Caco-2 (cell line): ENCODE measurements at regions of chr20 and their contacts with region 1.

Region 1: DNA sequence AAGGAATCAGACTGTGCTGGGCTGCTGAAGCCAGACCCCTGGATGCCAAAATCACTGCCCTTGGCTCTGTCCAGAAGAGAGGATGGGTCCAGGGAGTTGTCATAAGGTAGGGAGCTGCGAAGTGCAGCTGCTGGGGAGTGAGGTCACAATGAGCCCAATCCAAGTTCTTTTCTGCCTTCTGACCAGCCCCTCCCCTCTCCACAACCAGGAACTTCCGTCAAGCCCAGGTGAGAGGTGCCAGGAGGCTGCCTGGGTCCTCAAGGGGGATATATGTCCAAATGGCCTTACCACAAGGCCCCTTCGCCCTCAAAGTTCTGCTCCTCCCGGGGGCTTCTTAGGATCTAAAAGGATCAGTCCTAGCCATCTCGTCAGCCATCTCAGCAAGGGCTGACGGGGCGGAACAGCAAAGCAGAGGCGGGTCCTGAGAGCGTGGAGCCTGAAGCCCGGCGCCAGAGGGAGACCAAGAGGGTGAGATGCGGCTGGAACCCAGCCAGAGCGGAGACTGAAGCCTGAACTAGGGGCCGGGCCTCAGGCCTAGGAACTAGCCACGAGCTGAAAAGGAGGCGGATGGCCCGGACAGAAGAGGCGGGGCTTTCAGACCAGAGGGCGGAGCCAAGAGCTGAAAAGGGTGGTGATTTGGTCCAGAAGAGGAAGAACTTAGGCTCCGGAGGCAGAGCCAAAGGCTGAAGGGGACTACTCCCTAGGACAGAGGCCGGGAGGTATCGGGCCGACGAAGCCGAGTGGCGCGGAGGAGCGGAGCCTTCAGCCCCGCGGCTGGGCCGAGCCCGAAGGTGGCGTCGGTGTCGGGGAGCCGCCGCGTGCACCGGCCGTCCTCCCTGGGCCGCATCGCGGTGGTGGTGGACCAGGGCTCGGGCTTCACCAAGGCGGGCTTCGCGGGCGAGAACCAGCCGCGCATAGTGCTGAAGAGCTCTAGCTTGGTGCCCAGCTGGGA is at the start of gene ACTL10:
- DNase-seq: peak; percentile 100
- H3K4me3 ChIP-seq: peak within 1 kb of the TSS; percentile 78
- H3K4me3 Mint-ChIP-seq: peak within 1 kb of the TSS; percentile 84
- H3K27ac Mint-ChIP-seq: peak within 1 kb of the TSS; percentile 85
- H3K4me1 ChIP-seq: peaks cover 25% of the 10 kb centered on the region
- H3K4me1 Mint-ChIP-seq: peaks cover 24% of the 10 kb centered on the region
- H3K27me3 ChIP-seq: no peaks in the 10 kb centered on the region
- H3K27me3 Mint-ChIP-seq: no peaks in the 10 kb centered on the region
- CTCF ChIP-seq: peak; percentile 19 to 64
- total RNA-seq, gene ACTL10: 3.4 and 4.5 TPM in 2 replicates

Region 2: DNA sequence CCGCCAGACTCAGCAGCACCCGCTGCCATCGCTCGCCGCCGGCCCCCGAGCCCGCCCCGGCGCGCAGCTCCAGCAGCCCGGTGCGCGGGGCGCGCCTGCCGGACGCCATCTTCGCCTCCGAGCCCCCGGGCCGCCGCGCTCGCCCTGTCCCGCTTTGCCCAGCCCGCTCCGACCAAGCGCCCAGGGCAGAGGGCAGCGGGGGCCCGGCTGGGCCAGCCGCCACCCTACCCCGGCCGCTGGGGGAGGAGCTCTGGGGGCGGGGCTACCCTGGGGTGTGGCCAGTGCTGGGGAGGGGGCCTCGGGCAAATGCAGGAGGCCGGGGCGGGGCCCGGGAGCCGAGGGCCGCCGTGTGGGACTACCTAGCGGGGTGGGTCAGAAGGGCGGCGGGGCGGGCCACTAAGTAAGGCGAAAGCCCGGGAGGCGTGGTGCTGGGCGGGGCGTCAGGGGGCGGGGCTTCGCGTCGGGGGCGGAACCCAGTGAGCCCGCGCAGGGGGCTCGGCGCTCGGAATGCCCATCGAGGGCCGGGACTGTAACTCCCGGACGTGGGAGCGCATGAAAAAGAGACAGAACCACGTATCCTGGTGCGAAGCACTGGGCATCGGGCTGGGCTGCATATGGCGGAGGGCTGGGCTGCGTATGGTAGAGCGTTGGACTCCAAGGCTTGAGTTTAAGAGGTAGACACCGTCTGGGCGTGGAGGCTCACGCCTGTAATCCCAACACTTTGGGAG is 222.9 kb before region 1 on chr20 and contains the start of gene SNTA1:
- CTCF ChIA-PET with region 1: interaction called, 13 read pairs
- POLR2A ChIA-PET with region 1: interaction called, 3 read pairs
- intact Hi-C with region 1: no loop called
- DNase-seq: peak; percentile 100
- H3K4me3 ChIP-seq: peak within 1 kb of the TSS; percentile 72
- H3K4me3 Mint-ChIP-seq: peak within 1 kb of the TSS; percentile 89
- H3K27ac Mint-ChIP-seq: peak within 1 kb of the TSS; percentile 9
- H3K4me1 ChIP-seq: peaks cover 22% of the 10 kb centered on the region
- H3K4me1 Mint-ChIP-seq: peaks cover 26% of the 10 kb centered on the region
- H3K27me3 ChIP-seq: no peaks in the 10 kb centered on the region
- H3K27me3 Mint-ChIP-seq: no peaks in the 10 kb centered on the region
- CTCF ChIP-seq: no peak
- total RNA-seq, gene SNTA1: 13.6 and 15.4 TPM in 2 replicates

Region 3: DNA sequence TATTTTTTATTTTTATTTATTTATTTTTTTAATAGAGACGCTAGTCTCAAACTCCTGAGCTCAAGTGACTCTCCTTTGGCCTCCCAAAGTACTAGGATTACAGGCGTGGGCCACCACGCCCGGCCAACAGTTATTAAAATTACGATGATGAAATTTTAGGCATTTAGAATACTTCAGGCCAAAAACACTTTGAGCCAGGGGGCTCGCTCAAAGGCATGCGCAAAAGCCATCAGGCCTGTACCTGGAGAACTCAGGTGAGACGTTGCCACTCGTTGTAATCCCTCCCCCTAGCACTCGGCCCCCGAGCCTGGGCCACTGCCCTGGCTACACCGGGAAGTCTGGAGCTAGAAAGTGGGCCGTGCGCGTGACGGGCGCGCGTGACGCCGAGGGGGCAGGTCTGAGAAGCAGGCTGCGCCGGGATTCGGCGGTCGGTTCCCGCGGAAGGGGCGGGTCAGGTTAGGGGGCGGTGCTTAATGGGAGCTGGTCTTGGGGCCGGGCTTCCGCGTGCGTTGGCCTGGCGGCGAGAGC is 177.0 kb before region 1 on chr20:
- CTCF ChIA-PET with region 1: interaction called, 19 read pairs
- POLR2A ChIA-PET with region 1: interaction called, 14 read pairs
- intact Hi-C with region 1: no loop called
- DNase-seq: peak; percentile 100
- H3K4me3 ChIP-seq: peak overlapping the region; percentile 16
- H3K4me3 Mint-ChIP-seq: peak overlapping the region; percentile 92
- H3K27ac Mint-ChIP-seq: peak overlapping the region; percentile 38
- H3K4me1 ChIP-seq: peaks cover 14% of the 10 kb centered on the region
- H3K4me1 Mint-ChIP-seq: peaks cover 8% of the 10 kb centered on the region
- H3K27me3 ChIP-seq: no peaks in the 10 kb centered on the region
- H3K27me3 Mint-ChIP-seq: no peaks in the 10 kb centered on the region
- CTCF ChIP-seq: no peak

Region 4: GRCh38 chr20:33686100-33686983 is 19.8 kb after region 1 on chr20 and contains the start of gene E2F1:
- CTCF ChIA-PET with region 1: interaction called, 29 read pairs
- POLR2A ChIA-PET with region 1: interaction called, 9 read pairs
- intact Hi-C with region 1: loop called (anchors 2 kb)
- DNase-seq: peak; percentile 99 to 100
- H3K4me3 ChIP-seq: peak within 1 kb of the TSS; percentile 80
- H3K4me3 Mint-ChIP-seq: peak within 1 kb of the TSS; percentile 68
- H3K27ac Mint-ChIP-seq: peak within 1 kb of the TSS; percentile 78
- H3K4me1 ChIP-seq: peaks cover 46% of the 10 kb centered on the region
- H3K4me1 Mint-ChIP-seq: peaks cover 59% of the 10 kb centered on the region
- H3K27me3 ChIP-seq: no peaks in the 10 kb centered on the region
- H3K27me3 Mint-ChIP-seq: no peaks in the 10 kb centered on the region
- CTCF ChIP-seq: peak; percentile 56 to 64
- total RNA-seq, gene E2F1: 67.5 and 74.7 TPM in 2 replicates

Region 5: GRCh38 chr20:34069341-34070078 is 402.9 kb after region 1 on chr20:
- CTCF ChIA-PET with region 1: interaction called, 3 read pairs
- POLR2A ChIA-PET with region 1: no interaction called
- intact Hi-C with region 1: loop called (anchors 1 kb)
- DNase-seq: peak; percentile 86 to 91
- H3K4me3 ChIP-seq: no peak overlapping the region
- H3K4me3 Mint-ChIP-seq: no peak overlapping the region
- H3K27ac Mint-ChIP-seq: no peak overlapping the region
- H3K4me1 ChIP-seq: no peaks in the 10 kb centered on the region
- H3K4me1 Mint-ChIP-seq: no peaks in the 10 kb centered on the region
- H3K27me3 ChIP-seq: no peaks in the 10 kb centered on the region
- H3K27me3 Mint-ChIP-seq: no peaks in the 10 kb centered on the region
- CTCF ChIP-seq: peak; percentile 97 to 99